AG04450 (cell line): ENCODE measurements at regions of chr14 and their contacts with region 1.

Region 1: GRCh38 chr14:64680714-64681065 is 23.5 kb upstream of the PLEKHG3 start:
- DNase-seq: no peak
- H3K4me3 ChIP-seq: no peak overlapping the region
- H3K27ac ChIP-seq: no peak overlapping the region
- H3K27me3 ChIP-seq: peaks cover 4% of the 10 kb centered on the region
- CTCF ChIP-seq: no peak

Region 2: DNA sequence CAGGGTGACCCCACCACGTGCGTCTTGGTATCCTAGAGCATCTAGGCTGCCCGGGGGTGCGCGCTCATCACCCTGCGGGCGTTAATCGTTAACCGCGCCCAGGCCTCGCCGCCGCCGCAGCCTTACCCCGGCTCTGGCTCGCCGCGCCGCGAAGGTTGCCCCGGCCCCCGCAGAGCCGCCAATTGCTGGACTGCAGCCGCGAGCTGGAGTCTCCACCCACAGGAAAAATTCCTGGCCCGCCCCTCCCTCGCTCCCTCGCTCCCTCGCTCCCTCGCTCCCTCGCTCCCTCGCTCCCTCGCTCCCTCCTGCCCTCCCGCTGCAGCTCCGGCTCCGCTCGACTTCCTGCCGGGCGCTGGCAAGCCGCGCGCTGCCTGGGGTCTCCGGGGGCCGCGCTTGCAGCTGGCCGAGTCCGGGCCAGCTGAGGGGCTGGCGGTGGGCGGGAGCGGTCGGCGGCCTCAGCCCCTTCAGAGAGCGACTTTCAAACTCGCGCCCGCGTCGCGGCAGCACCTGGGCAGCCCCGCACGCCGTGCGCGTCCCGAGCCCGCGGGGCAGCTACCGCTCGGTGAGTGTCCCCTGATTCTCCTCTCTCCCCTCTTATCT is 23.6 kb after region 1 on chr14 and contains the start of gene PLEKHG3:
- CTCF ChIA-PET with region 1: interaction called, 3 read pairs
- POLR2A ChIA-PET with region 1: interaction called, 12 read pairs
- DNase-seq: peak; percentile 26
- H3K4me3 ChIP-seq: peak within 1 kb of the TSS; percentile 77
- H3K27ac ChIP-seq: no peak within 1 kb of the TSS
- H3K27me3 ChIP-seq: peaks cover 34% of the 10 kb centered on the region
- CTCF ChIP-seq: no peak
- polyA plus RNA-seq, gene PLEKHG3: 6.4 and 6.6 TPM in 2 replicates